AG04449 (cell line): ENCODE measurements at regions of chr18 and their contacts with region 1.

Region 1: GRCh38 chr18:11518788-11519685 is 90.4 kb upstream of the SLC35G4 start:
- DNase-seq: no peak
- H3K4me3 ChIP-seq: no peak overlapping the region
- CTCF ChIP-seq: peak; percentile 59

Region 2: GRCh38 chr18:11502368-11502767 is 16.7 kb before region 1 on chr18:
- CTCF ChIA-PET with region 1: interaction called, 15 read pairs
- POLR2A ChIA-PET with region 1: no interaction called
- DNase-seq: no peak
- H3K4me3 ChIP-seq: no peak overlapping the region
- CTCF ChIP-seq: no peak

Region 3: DNA sequence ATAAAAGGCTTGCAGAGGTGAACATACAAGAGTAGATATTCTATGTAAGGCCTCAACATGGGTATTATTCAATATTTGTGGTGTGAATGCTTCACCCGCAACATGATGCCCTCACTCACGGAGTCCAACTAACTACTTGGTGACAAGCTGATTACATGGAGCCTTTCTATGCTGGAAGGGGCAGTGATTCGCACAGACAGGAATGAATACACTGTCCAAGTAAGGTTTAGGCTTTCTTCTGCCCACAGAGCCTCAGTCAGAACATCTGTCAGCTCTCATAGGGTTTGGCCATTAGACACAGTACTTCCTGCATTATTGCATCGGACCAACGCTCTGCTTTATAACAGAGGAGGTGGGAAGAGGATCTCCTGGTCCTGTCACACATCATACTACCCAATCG is 10.0 kb after region 1 on chr18:
- CTCF ChIA-PET with region 1: interaction called, 22 read pairs
- POLR2A ChIA-PET with region 1: no interaction called
- DNase-seq: peak; percentile 41
- H3K4me3 ChIP-seq: no peak overlapping the region
- CTCF ChIP-seq: no peak